ENCODE measurements at regions of chr2 and their contacts with region 1.

Region 1: DNA sequence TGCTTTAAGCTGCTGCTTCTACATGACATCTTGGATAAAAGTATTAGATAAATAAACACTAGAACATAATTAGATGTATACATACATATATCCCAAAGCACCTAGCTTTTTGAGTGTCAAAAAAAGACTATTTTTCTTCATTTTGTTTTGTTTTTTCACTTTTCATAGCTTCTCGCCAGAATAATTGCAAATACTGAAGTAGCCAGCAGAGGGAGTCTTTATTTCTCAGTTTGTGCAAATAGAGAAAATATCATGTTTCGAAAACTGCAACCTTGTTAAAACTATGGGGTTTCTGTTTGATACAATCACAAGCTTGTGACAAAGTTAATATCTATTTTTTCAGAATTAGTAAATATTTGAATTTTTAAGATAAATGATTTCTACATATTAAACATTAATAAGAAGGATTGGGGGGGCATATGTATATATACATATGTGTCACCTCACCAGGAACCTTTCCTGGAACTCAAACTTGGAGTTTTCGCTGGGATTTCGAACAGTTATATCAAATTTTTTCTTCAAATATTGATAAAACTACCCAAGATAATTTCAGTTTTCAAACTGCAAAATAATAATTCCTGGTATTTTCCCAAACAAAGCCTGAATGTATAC is 61.0 kb downstream of the GRB14 start:
- DNase-seq: no peak
- H3K4me3 ChIP-seq: no peak overlapping the region
- H3K27ac ChIP-seq: no peak overlapping the region
- H3K27me3 ChIP-seq: no peaks in the 10 kb centered on the region
- CTCF ChIP-seq: peak; percentile 78

Region 2: DNA sequence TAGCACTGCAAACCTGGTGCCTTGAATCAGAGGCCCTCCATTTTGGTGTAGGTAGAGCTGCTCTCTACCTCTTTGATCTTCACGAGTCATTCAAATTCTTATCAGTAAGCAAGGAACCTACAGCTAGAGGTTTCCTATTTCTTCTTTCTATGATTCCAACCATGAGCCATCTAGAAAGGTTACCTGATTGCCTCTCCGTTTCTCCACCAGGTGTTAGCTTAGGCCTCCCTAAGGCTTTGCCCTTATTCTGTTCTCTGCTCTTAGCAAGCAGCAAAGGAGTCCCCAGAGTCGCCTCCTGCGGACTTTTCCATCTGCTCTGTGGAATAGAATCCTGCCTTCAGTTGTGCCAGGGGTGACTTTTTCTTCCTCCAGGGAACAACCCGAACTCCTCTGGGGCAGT is 112.6 kb before region 1 on chr2:
- CTCF ChIA-PET with region 1: no interaction called
- POLR2A ChIA-PET with region 1: no interaction called
- DNase-seq: no peak
- H3K4me3 ChIP-seq: no peak overlapping the region
- H3K27ac ChIP-seq: no peak overlapping the region
- H3K27me3 ChIP-seq: no peaks in the 10 kb centered on the region
- CTCF ChIP-seq: no peak

Region 3: DNA sequence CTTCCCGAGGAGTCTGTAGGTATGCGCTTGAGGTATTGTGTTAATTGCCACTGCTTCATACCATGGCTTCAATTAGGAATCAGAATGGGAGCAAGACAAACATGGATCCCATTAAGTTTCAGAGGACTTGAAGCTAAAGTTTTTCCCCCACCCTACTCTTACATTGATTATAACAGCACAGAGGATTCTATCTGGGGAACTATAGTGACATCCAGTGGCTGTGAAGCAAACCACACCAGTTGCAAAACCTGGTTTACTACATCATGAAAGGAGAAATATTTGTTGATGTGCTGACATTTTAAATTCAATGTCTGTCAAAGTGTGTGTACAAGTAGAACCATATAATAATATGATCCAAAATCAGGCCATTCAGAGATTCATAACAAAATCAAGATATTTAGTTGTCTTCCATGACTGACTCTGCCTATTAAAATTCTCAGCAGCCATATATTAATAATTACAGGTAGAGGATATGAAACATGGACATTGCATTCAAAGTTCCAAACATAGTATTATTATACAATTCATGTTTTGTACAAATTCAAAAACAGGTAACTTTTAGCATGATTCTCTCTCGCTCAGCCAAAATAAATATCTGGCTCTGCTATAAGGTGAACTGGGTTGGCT is 21.9 kb before region 1 on chr2:
- CTCF ChIA-PET with region 1: interaction called, 20 read pairs
- POLR2A ChIA-PET with region 1: no interaction called
- DNase-seq: no peak
- H3K4me3 ChIP-seq: no peak overlapping the region
- H3K27ac ChIP-seq: no peak overlapping the region
- H3K27me3 ChIP-seq: no peaks in the 10 kb centered on the region
- CTCF ChIP-seq: peak; percentile 72

Region 4: DNA sequence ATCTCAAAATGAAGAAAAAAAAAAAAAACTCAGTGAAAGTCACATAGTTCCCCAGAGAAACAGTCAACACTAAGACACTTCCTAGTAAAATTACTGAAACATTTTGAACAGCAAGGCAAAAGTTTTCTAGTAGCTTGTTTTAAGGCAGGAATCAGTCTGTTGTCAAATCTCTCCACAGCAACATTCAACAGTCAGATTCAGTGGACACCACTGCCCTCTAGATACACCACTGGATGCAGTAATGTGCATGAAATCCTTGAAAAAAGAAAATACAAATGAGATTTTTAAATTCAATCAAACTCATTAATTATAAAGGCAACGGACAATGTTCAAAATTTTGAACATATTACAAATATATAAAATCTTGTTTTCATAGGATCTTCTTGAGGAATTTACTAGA is 14.6 kb after region 1 on chr2:
- CTCF ChIA-PET with region 1: interaction called, 18 read pairs
- POLR2A ChIA-PET with region 1: no interaction called
- DNase-seq: no peak
- H3K4me3 ChIP-seq: no peak overlapping the region
- H3K27ac ChIP-seq: no peak overlapping the region
- H3K27me3 ChIP-seq: no peaks in the 10 kb centered on the region
- CTCF ChIP-seq: no peak

Region 5: DNA sequence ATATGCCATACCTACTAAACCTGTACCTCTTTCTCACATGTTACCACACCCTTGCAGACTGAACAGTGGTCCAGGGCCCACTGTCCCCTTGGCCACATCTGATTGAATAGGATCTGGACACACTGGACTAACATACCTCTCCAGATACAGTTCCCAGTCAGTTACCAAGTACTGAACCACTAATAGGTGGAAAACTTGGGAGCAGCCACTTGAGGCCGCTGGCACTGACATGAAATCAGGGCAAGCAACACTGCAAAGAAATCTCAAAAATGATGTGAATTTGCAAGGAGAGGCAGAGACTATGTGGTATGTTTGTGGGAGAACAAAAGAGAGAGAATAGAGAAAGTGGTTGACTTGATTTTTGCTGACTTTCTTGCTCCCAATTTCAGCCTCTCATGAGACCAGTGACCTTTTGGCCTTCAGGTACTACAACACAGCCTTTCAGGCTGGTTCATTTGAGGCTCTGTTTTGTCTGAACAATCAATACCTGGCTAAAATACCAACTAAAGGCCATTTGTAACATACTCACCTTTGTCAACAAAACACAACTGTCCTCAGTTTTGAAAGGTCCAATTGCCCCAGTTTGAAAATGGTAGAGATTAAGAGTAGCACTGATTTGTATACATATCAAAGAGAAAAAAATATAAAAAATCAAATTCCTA is 53.2 kb after region 1 on chr2:
- CTCF ChIA-PET with region 1: interaction called, 12 read pairs
- POLR2A ChIA-PET with region 1: no interaction called
- DNase-seq: no peak
- H3K4me3 ChIP-seq: no peak overlapping the region
- H3K27ac ChIP-seq: no peak overlapping the region
- H3K27me3 ChIP-seq: no peaks in the 10 kb centered on the region
- CTCF ChIP-seq: no peak

Region 6: GRCh38 chr2:164692114-164692513 is 131.8 kb after region 1 on chr2:
- CTCF ChIA-PET with region 1: interaction called, 10 read pairs
- POLR2A ChIA-PET with region 1: no interaction called
- DNase-seq: no peak
- H3K4me3 ChIP-seq: no peak overlapping the region
- H3K27ac ChIP-seq: no peak overlapping the region
- H3K27me3 ChIP-seq: no peaks in the 10 kb centered on the region
- CTCF ChIP-seq: no peak

Region 7: GRCh38 chr2:164706522-164706921 is 146.2 kb after region 1 on chr2:
- CTCF ChIA-PET with region 1: interaction called, 16 read pairs
- POLR2A ChIA-PET with region 1: no interaction called
- DNase-seq: no peak
- H3K4me3 ChIP-seq: no peak overlapping the region
- H3K27ac ChIP-seq: no peak overlapping the region
- H3K27me3 ChIP-seq: no peaks in the 10 kb centered on the region
- CTCF ChIP-seq: no peak

Region 8: DNA sequence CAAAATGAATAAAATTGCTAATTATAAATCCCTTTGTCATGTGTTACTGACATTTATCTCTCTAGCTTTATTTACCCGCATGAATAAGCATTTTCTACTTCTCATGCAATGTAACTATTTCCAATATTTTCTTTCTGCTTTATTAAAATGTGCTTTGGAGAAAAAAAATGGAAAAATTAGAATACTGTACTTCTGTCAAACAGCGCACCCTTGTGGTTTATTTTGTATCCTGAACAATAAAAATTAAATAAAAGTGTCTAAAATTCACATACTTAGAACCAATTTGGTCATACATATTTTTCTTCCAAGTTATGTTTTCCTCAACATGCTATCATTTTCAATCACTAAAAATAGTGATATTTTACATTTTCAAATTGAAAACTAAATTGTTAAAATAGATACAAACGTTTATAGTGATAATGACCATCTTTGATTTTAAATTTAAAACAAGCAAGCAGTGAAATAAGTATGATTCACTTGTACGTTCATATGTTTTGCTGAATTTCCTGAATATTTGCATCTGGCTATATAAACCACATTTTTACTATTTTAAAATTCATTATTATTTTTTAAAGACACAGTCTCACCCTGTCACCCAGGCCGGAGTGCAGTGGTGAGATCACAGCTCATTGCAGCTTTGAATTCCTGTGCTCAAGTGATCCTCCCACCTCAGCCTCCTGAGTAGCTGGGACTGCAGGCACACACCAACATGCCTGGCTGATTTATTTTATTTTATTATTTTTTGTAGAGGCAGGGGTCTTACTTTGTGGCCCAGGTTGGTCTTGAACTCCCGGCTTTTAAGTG is 156.9 kb after region 1 on chr2:
- CTCF ChIA-PET with region 1: interaction called, 177 read pairs
- POLR2A ChIA-PET with region 1: no interaction called
- DNase-seq: no peak
- H3K4me3 ChIP-seq: no peak overlapping the region
- H3K27ac ChIP-seq: no peak overlapping the region
- H3K27me3 ChIP-seq: no peaks in the 10 kb centered on the region
- CTCF ChIP-seq: peak; percentile 56